Spleen (tissue), 13 donors: ENCODE measurements at regions of chr19 and their contacts with region 1.

Region 1: DNA sequence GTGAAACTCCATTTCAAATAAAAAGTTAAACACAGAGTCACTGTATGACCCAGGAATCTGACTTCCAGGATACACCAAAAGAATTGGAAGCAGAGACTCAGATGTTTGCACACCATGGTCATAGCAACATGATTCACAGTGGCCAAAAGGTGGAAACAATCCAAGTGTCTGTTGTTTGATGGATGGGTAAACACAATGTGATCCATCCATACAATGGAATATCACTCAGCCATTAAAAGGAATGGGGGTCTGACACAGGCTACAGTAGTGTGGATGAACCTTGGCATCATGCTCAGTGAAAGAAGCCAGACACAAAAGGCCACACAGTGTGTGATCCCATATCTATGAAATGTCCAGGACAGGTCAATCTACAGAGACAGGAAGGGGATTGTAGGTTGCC is 174.3 kb downstream of the PTPRS start:
- DNase-seq: no peak
- H3K4me3 ChIP-seq: no peak overlapping the region
- H3K27ac ChIP-seq: no peak overlapping the region
- H3K4me1 ChIP-seq: no peaks in the 10 kb centered on the region
- H3K27me3 ChIP-seq: no peaks in the 10 kb centered on the region
- CTCF ChIP-seq: no peak
- POLR2A ChIP-seq: no peak

Region 2: GRCh38 chr19:5057861-5058260 is 108.4 kb before region 1 on chr19:
- intact Hi-C with region 1: loop called (anchors 10 kb)
- DNase-seq: no peak
- H3K4me3 ChIP-seq: no peak overlapping the region
- H3K27ac ChIP-seq: no peak overlapping the region
- H3K4me1 ChIP-seq: peaks cover 0 to 12% (median 10%) of the 10 kb centered on the region in 6 donors
- H3K27me3 ChIP-seq: no peaks in the 10 kb centered on the region
- CTCF ChIP-seq: no peak
- POLR2A ChIP-seq: no peak